ENCODE measurements at regions of chr6 and their contacts with region 1.

Region 1: GRCh38 chr6:27893059-27893835 is 18.9 kb downstream of the OR2B2 start:
- DNase-seq: peak; percentile 79 to 96 (median 85)
- ATAC-seq: peak; percentile 72
- H3K4me3 ChIP-seq: peak overlapping the region; percentile 66 to 81
- H3K4me3 Mint-ChIP-seq: no peak overlapping the region
- H3K27ac ChIP-seq: peak overlapping the region; percentile 70 to 88
- H3K27ac Mint-ChIP-seq: no peak overlapping the region
- H3K4me1 ChIP-seq: peaks cover 18% of the 10 kb centered on the region
- H3K4me1 Mint-ChIP-seq: peaks cover 29% of the 10 kb centered on the region
- H3K27me3 ChIP-seq: no peaks in the 10 kb centered on the region
- H3K27me3 Mint-ChIP-seq: no peaks in the 10 kb centered on the region
- CTCF ChIP-seq: no peak

Region 2: GRCh38 chr6:26020329-26021000 is 1872.8 kb before region 1 on chr6:
- CTCF ChIA-PET with region 1: no interaction called
- POLR2A ChIA-PET with region 1: interaction called, 16 read pairs
- intact Hi-C with region 1: loop called (anchors 5 kb)
- DNase-seq: peak; percentile 69 to 95 (median 78)
- ATAC-seq: peak; percentile 47
- H3K4me3 ChIP-seq: peak overlapping the region; percentile 85 to 88
- H3K4me3 Mint-ChIP-seq: peak overlapping the region; percentile 88
- H3K27ac ChIP-seq: peak overlapping the region; percentile 95 to 98
- H3K27ac Mint-ChIP-seq: peak overlapping the region; percentile 99
- H3K4me1 ChIP-seq: peaks cover 10% of the 10 kb centered on the region
- H3K4me1 Mint-ChIP-seq: peaks cover 41% of the 10 kb centered on the region
- H3K27me3 ChIP-seq: no peaks in the 10 kb centered on the region
- H3K27me3 Mint-ChIP-seq: no peaks in the 10 kb centered on the region
- CTCF ChIP-seq: no peak

Region 3: GRCh38 chr6:26216356-26216885 is 1676.8 kb before region 1 on chr6:
- CTCF ChIA-PET with region 1: interaction called, 3 read pairs
- POLR2A ChIA-PET with region 1: interaction called, 12 read pairs
- intact Hi-C with region 1: no loop called
- DNase-seq: peak; percentile 61 to 96 (median 73)
- ATAC-seq: peak; percentile 79
- H3K4me3 ChIP-seq: peak overlapping the region; percentile 71 to 74
- H3K4me3 Mint-ChIP-seq: no peak overlapping the region
- H3K27ac ChIP-seq: peak overlapping the region; percentile 82 to 91
- H3K27ac Mint-ChIP-seq: no peak overlapping the region
- H3K4me1 ChIP-seq: peaks cover 19% of the 10 kb centered on the region
- H3K4me1 Mint-ChIP-seq: peaks cover 14% of the 10 kb centered on the region
- H3K27me3 ChIP-seq: no peaks in the 10 kb centered on the region
- H3K27me3 Mint-ChIP-seq: no peaks in the 10 kb centered on the region
- CTCF ChIP-seq: no peak

Region 4: DNA sequence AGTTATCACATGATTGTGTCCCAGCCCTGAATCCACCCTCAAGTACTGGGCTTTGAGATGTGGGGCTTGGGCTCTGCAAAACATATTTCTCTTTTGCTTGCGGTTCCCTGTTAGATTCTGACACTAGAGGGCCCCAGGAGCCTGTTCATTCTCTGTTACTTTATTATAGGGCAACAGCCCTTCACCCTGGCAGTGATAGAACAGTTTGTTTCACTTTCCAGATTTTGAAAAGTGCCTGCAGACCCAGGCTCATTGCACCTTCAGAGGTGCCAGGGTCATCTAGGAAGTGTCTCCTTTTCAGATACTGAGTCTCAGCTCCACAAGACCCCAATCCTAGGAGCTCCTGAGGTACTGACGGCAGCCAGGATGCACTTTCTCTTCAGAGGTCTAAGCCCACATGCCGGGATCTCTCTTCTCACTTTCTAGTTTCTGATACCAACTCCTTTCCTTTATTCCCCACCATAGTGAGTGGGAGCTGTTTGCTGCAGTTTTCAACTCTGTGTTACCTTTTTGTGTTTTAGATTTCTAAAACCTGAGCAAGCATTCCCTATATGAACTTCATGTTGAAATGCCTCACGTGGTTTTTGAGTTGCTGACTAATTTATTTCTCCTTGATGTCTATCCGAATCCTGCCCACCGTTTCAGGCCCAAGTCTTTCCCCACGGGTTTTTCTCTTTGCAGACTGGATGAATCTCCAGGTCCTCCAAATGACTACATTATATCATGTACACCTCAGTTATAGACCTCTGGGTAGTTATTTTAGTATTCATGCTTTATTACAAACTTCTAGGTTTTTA is 1285.6 kb before region 1 on chr6:
- CTCF ChIA-PET with region 1: no interaction called
- POLR2A ChIA-PET with region 1: no interaction called
- intact Hi-C with region 1: loop called in 1 of 2 experiments (anchors 5 kb)
- DNase-seq: peak in 7 of 9 experiments; percentile 37 to 78 (median 64)
- ATAC-seq: peak; percentile 98
- H3K4me3 ChIP-seq: peak overlapping the region in 1 of 2 experiments; percentile 16
- H3K4me3 Mint-ChIP-seq: peak overlapping the region; percentile 70
- H3K27ac ChIP-seq: no peak overlapping the region
- H3K27ac Mint-ChIP-seq: peak overlapping the region; percentile 3
- H3K4me1 ChIP-seq: no peaks in the 10 kb centered on the region
- H3K4me1 Mint-ChIP-seq: peaks cover 10% of the 10 kb centered on the region
- H3K27me3 ChIP-seq: no peaks in the 10 kb centered on the region
- H3K27me3 Mint-ChIP-seq: peaks cover 6% of the 10 kb centered on the region
- CTCF ChIP-seq: peak; percentile 72

Region 5: DNA sequence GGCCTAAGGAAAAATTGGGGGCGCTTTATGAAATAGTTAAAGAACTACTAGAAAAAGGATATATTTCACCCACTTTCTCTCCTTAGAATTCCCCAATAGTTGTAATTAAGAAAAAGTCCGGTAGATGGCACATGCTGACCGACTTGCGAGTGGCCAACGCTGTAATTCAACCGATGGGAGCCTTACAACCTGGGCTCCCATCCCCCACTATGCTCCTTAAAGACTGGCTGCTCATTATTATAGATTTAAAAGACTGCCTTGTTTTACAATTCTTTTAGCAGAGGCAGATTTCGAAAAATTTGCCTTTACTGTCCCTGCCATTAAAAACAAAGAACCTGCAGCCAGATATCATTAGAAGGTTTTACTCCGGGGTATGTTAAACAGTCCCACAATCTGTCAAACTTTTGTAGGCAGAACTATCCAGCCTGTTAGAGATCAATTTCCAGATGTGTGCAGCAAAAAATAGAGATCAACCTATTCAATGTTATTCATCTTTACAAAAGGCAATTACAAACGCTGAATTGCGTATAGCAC is 704.3 kb before region 1 on chr6:
- CTCF ChIA-PET with region 1: interaction called, 9 read pairs
- POLR2A ChIA-PET with region 1: no interaction called
- intact Hi-C with region 1: loop called in 1 of 2 experiments (anchors 1 kb)
- DNase-seq: peak in 8 of 9 experiments; percentile 24 to 86 (median 50)
- ATAC-seq: peak; percentile 77
- H3K4me3 ChIP-seq: peak overlapping the region; percentile 58 to 62
- H3K4me3 Mint-ChIP-seq: peak overlapping the region; percentile 87
- H3K27ac ChIP-seq: peak overlapping the region in 1 of 2 experiments; percentile 33
- H3K27ac Mint-ChIP-seq: no peak overlapping the region
- H3K4me1 ChIP-seq: peaks cover 4% of the 10 kb centered on the region
- H3K4me1 Mint-ChIP-seq: peaks cover 10% of the 10 kb centered on the region
- H3K27me3 ChIP-seq: no peaks in the 10 kb centered on the region
- H3K27me3 Mint-ChIP-seq: no peaks in the 10 kb centered on the region
- CTCF ChIP-seq: peak; percentile 66

Region 6: GRCh38 chr6:27753668-27754407 is 139.4 kb before region 1 on chr6:
- CTCF ChIA-PET with region 1: interaction called, 12 read pairs
- POLR2A ChIA-PET with region 1: interaction called, 27 read pairs
- intact Hi-C with region 1: loop called (anchors 1 kb)
- DNase-seq: peak; percentile 24 to 79 (median 64)
- ATAC-seq: no peak
- H3K4me3 ChIP-seq: peak overlapping the region; percentile 69 to 84
- H3K4me3 Mint-ChIP-seq: peak overlapping the region; percentile 86
- H3K27ac ChIP-seq: peak overlapping the region in 1 of 2 experiments; percentile 25
- H3K27ac Mint-ChIP-seq: peak overlapping the region; percentile 86
- H3K4me1 ChIP-seq: peaks cover 12% of the 10 kb centered on the region
- H3K4me1 Mint-ChIP-seq: peaks cover 34% of the 10 kb centered on the region
- H3K27me3 ChIP-seq: peaks cover 0 to 2% of the 10 kb centered on the region in 2 experiments
- H3K27me3 Mint-ChIP-seq: no peaks in the 10 kb centered on the region
- CTCF ChIP-seq: no peak

Region 7: DNA sequence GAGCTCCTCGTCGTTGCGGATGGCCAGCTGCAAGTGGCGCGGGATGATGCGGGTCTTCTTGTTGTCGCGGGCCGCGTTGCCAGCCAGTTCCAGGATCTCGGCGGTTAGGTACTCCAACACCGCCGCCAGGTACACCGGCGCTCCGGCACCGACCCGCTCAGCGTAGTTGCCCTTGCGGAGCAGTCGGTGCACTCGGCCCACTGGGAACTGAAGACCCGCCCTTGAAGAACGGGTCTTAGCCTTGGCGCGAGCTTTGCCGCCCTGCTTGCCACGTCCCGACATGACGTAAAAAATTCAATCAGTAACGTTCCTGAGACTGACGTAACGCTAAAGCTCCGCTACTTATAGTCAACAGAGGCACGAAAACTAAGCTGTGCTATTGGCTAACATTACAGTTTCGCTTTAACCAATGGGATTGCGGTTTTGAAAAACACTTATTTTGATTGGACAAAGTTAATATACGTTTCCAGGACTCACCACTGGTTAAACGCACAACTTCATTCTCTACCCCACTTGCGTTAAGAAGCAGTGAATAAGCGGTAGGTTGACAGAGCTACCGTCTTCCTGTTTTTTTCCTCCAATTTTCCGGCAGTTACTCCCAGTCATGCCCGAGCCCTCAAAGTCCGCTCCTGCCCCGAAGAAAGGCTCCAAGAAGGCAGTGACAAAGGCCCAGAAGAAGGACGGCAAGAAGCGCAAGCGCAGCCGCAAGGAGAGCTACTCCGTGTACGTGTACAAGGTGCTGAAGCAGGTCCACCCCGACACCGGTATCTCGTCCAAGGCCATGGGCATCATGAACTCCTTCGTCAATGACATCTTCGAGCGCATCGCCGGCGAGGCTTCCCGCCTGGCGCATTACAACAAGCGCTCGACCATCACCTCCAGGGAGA is 54.9 kb before region 1 on chr6:
- CTCF ChIA-PET with region 1: interaction called, 92 read pairs
- POLR2A ChIA-PET with region 1: interaction called, 307 read pairs
- intact Hi-C with region 1: loop called (anchors 1 kb)
- DNase-seq: peak; percentile 61 to 98 (median 74)
- ATAC-seq: peak; percentile 70
- H3K4me3 ChIP-seq: peak overlapping the region; percentile 64 to 76
- H3K4me3 Mint-ChIP-seq: no peak overlapping the region
- H3K27ac ChIP-seq: peak overlapping the region; percentile 91 to 98
- H3K27ac Mint-ChIP-seq: no peak overlapping the region
- H3K4me1 ChIP-seq: peaks cover 35% of the 10 kb centered on the region
- H3K4me1 Mint-ChIP-seq: peaks cover 21% of the 10 kb centered on the region
- H3K27me3 ChIP-seq: peaks cover 0 to 4% of the 10 kb centered on the region in 2 experiments
- H3K27me3 Mint-ChIP-seq: peaks cover 7% of the 10 kb centered on the region
- CTCF ChIP-seq: no peak

Region 8: GRCh38 chr6:27851440-27851839 is 41.8 kb before region 1 on chr6:
- CTCF ChIA-PET with region 1: no interaction called
- POLR2A ChIA-PET with region 1: no interaction called
- intact Hi-C with region 1: no loop called
- DNase-seq: no peak
- ATAC-seq: no peak
- H3K4me3 ChIP-seq: no peak overlapping the region
- H3K4me3 Mint-ChIP-seq: no peak overlapping the region
- H3K27ac ChIP-seq: no peak overlapping the region
- H3K27ac Mint-ChIP-seq: no peak overlapping the region
- H3K4me1 ChIP-seq: no peaks in the 10 kb centered on the region
- H3K4me1 Mint-ChIP-seq: no peaks in the 10 kb centered on the region
- H3K27me3 ChIP-seq: peaks cover 0 to 2% of the 10 kb centered on the region in 2 experiments
- H3K27me3 Mint-ChIP-seq: no peaks in the 10 kb centered on the region
- CTCF ChIP-seq: no peak

Measured in CD8-positive, alpha-beta T cell (primary cell).